ENCODE measurements at regions of chr11 and their contacts with region 1.

Region 1: GRCh38 chr11:64204464-64204989 is 2.0 kb upstream of the FERMT3 start:
- DNase-seq: peak; percentile 67
- H3K4me3 Mint-ChIP-seq: peak overlapping the region; percentile 75
- H3K27ac Mint-ChIP-seq: peak overlapping the region; percentile 81
- H3K4me1 Mint-ChIP-seq: peaks cover 21% of the 10 kb centered on the region
- H3K27me3 Mint-ChIP-seq: no peaks in the 10 kb centered on the region

Region 2: GRCh38 chr11:64225612-64226506 is 21.3 kb after region 1 on chr11 and contains the starts of genes NUDT22 and TRPT1:
- intact Hi-C with region 1: loop called (anchors 1 kb)
- DNase-seq: peak; percentile 91
- H3K4me3 Mint-ChIP-seq: peak within 1 kb of the TSS; percentile 84
- H3K27ac Mint-ChIP-seq: peak within 1 kb of the TSS; percentile 62
- H3K4me1 Mint-ChIP-seq: peaks cover 21% of the 10 kb centered on the region
- H3K27me3 Mint-ChIP-seq: no peaks in the 10 kb centered on the region
- total RNA-seq, gene NUDT22: 72.8 and 77.0 TPM in 2 replicates
- total RNA-seq, gene TRPT1: 33.7 and 35.5 TPM in 2 replicates

Region 3: GRCh38 chr11:64240394-64241174 is 36.1 kb after region 1 on chr11 and contains the start of gene FKBP2:
- intact Hi-C with region 1: loop called (anchors 2 kb)
- DNase-seq: peak; percentile 98
- H3K4me3 Mint-ChIP-seq: peak within 1 kb of the TSS; percentile 94
- H3K27ac Mint-ChIP-seq: peak within 1 kb of the TSS; percentile 93
- H3K4me1 Mint-ChIP-seq: peaks cover 21% of the 10 kb centered on the region
- H3K27me3 Mint-ChIP-seq: no peaks in the 10 kb centered on the region
- total RNA-seq, gene FKBP2: 36.6 and 37.1 TPM in 2 replicates

Region 4: GRCh38 chr11:64358907-64359711 is 154.6 kb after region 1 on chr11 and contains the start of gene RPS6KA4:
- intact Hi-C with region 1: loop called (anchors 5 kb)
- DNase-seq: peak; percentile 54
- H3K4me3 Mint-ChIP-seq: peak within 1 kb of the TSS; percentile 91
- H3K27ac Mint-ChIP-seq: peak within 1 kb of the TSS; percentile 83
- H3K4me1 Mint-ChIP-seq: peaks cover 21% of the 10 kb centered on the region
- H3K27me3 Mint-ChIP-seq: no peaks in the 10 kb centered on the region
- total RNA-seq, gene RPS6KA4: 38.7 and 43.7 TPM in 2 replicates

Measured in activated T-helper 2 cell treated with anti-CD3 and anti-CD28 coated beads, Interferon-gamma antibody, Interleukin-2, Interleukin-4, amounts not matched to agents 10 μg/mL and 5 μg/mL and 100 μg/mL, durations not matched to agents 14 hours and 24 hours and 36 hours (primary cell).